HEK293T (cell line): ENCODE measurements at regions of chr6 and their contacts with region 1.

Region 1: GRCh38 chr6:53064726-53065215 is 433 bp upstream of the FBXO9 start:
- DNase-seq: peak; percentile 86

Region 2: DNA sequence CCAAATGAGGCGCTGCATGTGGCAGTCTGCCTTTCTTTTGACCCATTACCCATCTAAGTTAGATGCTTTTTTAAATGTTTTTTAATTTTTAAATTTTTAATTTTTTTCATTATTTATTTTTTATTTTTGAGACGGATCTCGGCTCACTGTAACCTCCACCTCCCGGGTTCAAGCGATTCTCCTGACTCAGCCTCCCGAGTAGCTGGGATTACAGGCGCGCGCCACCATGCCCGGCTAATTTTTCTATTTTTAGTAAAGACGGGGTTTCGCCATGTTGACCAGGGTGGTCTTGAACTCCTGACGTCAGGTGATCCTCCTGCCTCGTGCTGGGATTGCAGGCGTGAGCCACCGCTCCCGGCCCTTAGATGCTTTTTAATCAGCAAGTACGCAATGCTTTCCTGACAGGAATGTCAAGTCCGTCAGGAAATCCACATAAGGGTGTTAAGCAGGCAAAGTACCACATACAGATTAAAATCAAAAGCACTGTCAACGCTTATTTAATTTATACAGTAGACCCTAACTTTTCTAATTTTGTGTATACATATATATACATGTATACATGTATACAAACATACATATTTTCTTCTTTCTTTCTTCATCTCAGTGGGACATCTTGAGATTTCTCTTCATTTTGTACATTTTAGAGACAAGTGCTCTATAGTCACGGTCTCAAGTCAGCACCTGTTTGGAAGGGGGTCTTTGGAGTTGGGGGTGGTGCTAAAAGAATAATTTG is 68.7 kb before region 1 on chr6:
- CTCF ChIA-PET with region 1: interaction called, 4 read pairs
- POLR2A ChIA-PET with region 1: interaction called, 17 read pairs
- DNase-seq: peak; percentile 25